Tibial artery (tissue), 4 donors: ENCODE measurements at regions of chr16 and their contacts with region 1.

Region 1: DNA sequence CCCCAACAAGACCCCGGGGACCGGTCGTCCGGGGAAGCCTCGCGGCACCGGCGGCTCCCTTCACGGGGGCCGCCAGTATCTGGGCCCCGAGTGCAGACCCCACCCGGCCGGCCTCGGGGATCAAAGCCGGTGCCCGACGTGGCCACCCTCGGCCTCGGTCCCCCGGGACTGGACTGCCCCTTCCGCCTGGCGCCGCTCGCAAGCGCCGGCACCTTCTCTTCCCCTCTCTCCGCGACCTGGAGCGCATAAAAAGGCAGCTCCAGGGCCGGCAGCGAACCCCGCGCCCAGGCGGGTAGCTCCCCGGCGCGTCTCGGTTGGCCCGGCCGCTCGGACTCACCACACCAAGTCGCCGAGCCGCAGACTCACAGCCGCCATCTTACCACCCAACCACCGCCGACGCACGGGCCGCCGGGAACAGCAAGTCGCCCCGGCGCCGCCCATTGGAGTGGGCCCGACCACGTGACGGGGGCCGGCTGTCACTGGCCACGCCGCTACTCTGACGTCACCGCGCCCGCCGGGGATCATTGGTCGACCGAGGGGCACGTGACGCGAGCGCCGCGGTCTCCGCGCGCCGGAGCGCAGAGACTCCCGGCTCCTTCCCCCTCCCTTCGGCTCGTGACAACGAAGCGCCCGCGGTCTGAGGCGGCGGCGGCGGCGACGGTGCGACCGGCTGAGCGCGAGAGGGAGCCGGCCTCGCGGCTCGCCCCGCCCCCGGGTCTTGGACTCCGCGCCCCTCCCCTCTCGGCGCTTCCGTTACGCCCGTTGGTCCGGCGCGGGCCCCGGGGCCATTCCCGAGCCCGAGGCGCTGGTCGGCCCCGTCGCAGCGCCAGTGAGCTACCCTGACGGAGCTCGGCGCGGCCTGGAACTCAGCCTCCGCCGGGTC is at the starts of genes GLYR1 and UBN1:
- DNase-seq: peak; percentile 99 to 100
- H3K4me3 ChIP-seq: peak within 1 kb of the TSS; percentile 79 to 95
- H3K27ac ChIP-seq: peak within 1 kb of the TSS; percentile 91
- H3K4me1 ChIP-seq: peaks cover 0 to 55% (median 45%) of the 10 kb centered on the region in 4 donors
- H3K27me3 ChIP-seq: no peaks in the 10 kb centered on the region
- CTCF ChIP-seq: peak in 1 of 2 experiments; percentile 15

Region 2: GRCh38 chr16:4766874-4767628 is 80.1 kb before region 1 on chr16 and contains the start of gene ZNF500:
- intact Hi-C with region 1: loop called (anchors 5 kb)
- DNase-seq: peak; percentile 98 to 99
- H3K4me3 ChIP-seq: peak within 1 kb of the TSS; percentile 69 to 95
- H3K27ac ChIP-seq: peak within 1 kb of the TSS; percentile 85 to 88
- H3K4me1 ChIP-seq: peaks cover 0 to 37% (median 25%) of the 10 kb centered on the region in 4 donors
- H3K27me3 ChIP-seq: no peaks in the 10 kb centered on the region
- CTCF ChIP-seq: no peak

Region 3: DNA sequence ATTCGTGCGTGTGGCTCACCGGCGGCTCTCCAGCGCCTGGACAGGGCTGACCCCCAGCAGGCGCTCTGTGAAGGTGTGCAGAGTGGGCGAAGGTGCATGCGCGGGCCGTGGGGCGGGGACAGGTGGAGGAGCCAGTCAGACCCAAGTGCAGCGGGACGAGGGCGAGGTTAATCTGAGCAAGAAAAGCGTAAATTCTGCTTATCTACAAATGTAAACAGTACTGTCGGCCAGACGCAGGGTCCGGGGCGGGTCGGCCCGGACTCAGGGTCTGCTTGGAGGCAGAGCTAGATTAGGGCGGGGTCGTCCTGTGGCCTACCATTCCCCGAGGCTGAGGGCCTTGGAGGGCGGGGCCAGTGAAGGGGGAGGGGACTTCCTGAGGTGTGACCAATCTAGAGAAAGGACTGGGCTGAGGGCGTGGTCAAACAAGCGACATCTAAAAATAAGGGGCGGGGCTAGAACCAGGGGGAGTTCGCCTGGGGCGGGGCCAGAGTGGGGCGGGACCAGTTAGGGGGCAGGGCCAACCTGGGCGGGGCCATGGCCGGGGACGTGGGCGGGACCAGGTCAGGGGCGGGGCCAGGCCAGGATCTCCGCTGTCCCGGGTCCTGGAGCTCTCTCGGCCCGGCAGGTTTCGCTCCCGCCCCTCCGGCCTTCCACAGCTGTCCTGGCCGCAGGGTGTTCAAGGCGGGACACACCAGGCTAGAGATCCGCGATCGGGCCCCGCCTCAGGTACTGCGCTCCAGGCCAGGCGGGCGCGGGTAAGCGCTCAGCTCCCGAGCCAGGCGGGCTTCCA is 110.8 kb after region 1 on chr16 and contains the start of gene SEC14L5:
- intact Hi-C with region 1: loop called (anchors 2 kb)
- DNase-seq: peak; percentile 98
- H3K4me3 ChIP-seq: peak within 1 kb of the TSS; percentile 44 to 60
- H3K27ac ChIP-seq: peak within 1 kb of the TSS; percentile 56 to 61
- H3K4me1 ChIP-seq: peaks cover 4 to 30% (median 20%) of the 10 kb centered on the region in 4 donors
- H3K27me3 ChIP-seq: peaks cover 0 to 4% of the 10 kb centered on the region in 2 donors
- CTCF ChIP-seq: no peak

Region 4: GRCh38 chr16:5078626-5079025 is 231.5 kb after region 1 on chr16:
- intact Hi-C with region 1: no loop called
- DNase-seq: no peak
- H3K4me3 ChIP-seq: no peak overlapping the region
- H3K27ac ChIP-seq: no peak overlapping the region
- H3K4me1 ChIP-seq: no peaks in the 10 kb centered on the region
- H3K27me3 ChIP-seq: no peaks in the 10 kb centered on the region
- CTCF ChIP-seq: no peak